ENCODE measurements at regions of chr11 and their contacts with region 1.

Region 1: GRCh38 chr11:70364745-70365543 is 33.4 kb upstream of the CTTN start:
- DNase-seq: no peak
- H3K4me3 ChIP-seq: no peak overlapping the region
- H3K27ac ChIP-seq: no peak overlapping the region
- H3K4me1 ChIP-seq: no peaks in the 10 kb centered on the region
- H3K27me3 ChIP-seq: no peaks in the 10 kb centered on the region
- CTCF ChIP-seq: no peak

Region 2: GRCh38 chr11:70108250-70108649 is 256.7 kb before region 1 on chr11:
- CTCF ChIA-PET with region 1: no interaction called
- dilution Hi-C with region 1: loop called (anchors 10 kb)
- in situ Hi-C with region 1: no loop called
- intact Hi-C with region 1: no loop called
- DNase-seq: no peak
- H3K4me3 ChIP-seq: no peak overlapping the region
- H3K27ac ChIP-seq: no peak overlapping the region
- H3K4me1 ChIP-seq: no peaks in the 10 kb centered on the region
- H3K27me3 ChIP-seq: no peaks in the 10 kb centered on the region
- CTCF ChIP-seq: no peak

Region 3: DNA sequence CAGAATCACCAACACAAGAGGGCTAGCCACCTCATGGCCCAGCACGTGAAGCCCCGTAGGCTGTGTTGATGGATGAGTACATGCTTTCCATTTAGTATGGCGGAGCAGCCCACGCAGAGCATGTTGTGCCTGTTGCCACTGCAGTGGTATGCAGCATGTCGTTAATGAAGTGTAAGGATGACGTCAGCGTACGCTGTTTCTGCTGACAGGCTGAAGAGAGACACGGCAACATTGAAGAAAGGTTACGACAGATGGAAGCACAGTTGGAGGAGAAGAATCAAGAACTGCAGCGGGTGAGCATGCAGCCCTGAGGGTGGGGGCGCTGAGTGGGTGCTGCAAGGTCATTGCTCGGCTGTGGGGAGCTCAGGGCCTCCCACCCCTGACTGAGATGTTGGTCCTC is 31.7 kb before region 1 on chr11:
- CTCF ChIA-PET with region 1: no interaction called
- dilution Hi-C with region 1: loop called (anchors 5 kb)
- in situ Hi-C with region 1: no loop called
- intact Hi-C with region 1: no loop called
- DNase-seq: no peak
- H3K4me3 ChIP-seq: no peak overlapping the region
- H3K27ac ChIP-seq: no peak overlapping the region
- H3K4me1 ChIP-seq: no peaks in the 10 kb centered on the region
- H3K27me3 ChIP-seq: no peaks in the 10 kb centered on the region
- CTCF ChIP-seq: no peak

Measured in mammary epithelial cell (primary cell).